ENCODE measurements at regions of chr17 and their contacts with region 1.

Region 1: DNA sequence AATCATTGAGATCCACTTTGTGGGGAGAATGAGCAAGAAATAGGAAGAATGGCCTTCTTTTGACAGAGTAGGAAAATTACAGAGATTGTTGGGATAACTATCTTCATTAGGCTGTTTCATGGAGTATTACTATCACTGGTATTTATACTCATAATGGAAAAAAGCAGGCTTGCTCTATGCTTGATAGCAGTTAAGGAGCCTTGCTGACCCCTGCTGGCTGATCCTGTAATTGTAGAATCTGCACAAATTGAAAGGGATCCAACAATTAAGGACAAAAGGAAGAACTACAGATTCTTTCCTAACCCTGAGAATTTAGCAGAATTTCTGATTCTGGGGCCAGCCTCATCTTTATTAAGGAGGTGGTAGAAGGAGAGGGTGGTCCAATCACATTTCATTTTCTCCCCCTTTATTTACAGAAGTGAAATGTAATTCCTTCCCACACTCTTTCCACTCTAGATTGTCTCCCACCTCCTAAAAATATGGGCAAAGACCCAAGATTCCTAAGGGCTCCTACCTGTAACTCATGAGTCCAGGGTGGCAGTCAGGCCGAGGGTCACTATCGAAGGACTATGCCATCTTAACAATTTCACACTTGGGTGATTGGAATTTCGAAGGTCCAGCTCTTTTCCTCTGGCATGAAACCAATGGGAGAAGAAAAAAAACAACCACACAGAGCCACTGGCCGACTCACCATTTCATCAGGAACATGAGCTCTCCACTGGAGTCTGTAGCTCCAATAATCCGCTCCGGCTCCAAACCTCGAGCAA is 26.3 kb downstream of the NFE2L1 start:
- DNase-seq: peak; percentile 64 to 85 (median 69)
- H3K4me3 ChIP-seq: no peak overlapping the region
- H3K4me3 Mint-ChIP-seq: no peak overlapping the region
- H3K27ac ChIP-seq: no peak overlapping the region
- H3K27ac Mint-ChIP-seq: peak overlapping the region in 2 of 7 donors; percentile 48 to 57
- H3K4me1 ChIP-seq: no peaks in the 10 kb centered on the region
- H3K4me1 Mint-ChIP-seq: peaks cover 0 to 6% (median 2%) of the 10 kb centered on the region in 4 donors
- H3K27me3 ChIP-seq: no peaks in the 10 kb centered on the region
- H3K27me3 Mint-ChIP-seq: no peaks in the 10 kb centered on the region

Region 2: GRCh38 chr17:48011405-48012150 is 62.9 kb before region 1 on chr17:
- CTCF ChIA-PET with region 1: interaction called, 22 read pairs
- POLR2A ChIA-PET with region 1: no interaction called
- intact Hi-C with region 1: no loop called
- DNase-seq: peak; percentile 25 to 51 (median 42)
- H3K4me3 ChIP-seq: peak overlapping the region in 1 of 2 donors; percentile 36
- H3K4me3 Mint-ChIP-seq: peak overlapping the region; percentile 76 to 92 (median 84)
- H3K27ac ChIP-seq: no peak overlapping the region
- H3K27ac Mint-ChIP-seq: peak overlapping the region in 3 of 7 donors; percentile 11 to 85 (median 77)
- H3K4me1 ChIP-seq: peaks cover 8% of the 10 kb centered on the region
- H3K4me1 Mint-ChIP-seq: peaks cover 9 to 18% (median 14%) of the 10 kb centered on the region in 4 donors
- H3K27me3 ChIP-seq: peaks cover 11% of the 10 kb centered on the region
- H3K27me3 Mint-ChIP-seq: peaks cover 22 to 42% of the 10 kb centered on the region in 2 donors

Region 3: GRCh38 chr17:48037036-48037837 is 37.3 kb before region 1 on chr17 and contains the start of gene COPZ2:
- CTCF ChIA-PET with region 1: interaction called, 38 read pairs
- POLR2A ChIA-PET with region 1: no interaction called
- intact Hi-C with region 1: loop called (anchors 1 kb)
- DNase-seq: peak; percentile 62 to 74 (median 63)
- H3K4me3 ChIP-seq: peak within 1 kb of the TSS; percentile 23 to 67
- H3K4me3 Mint-ChIP-seq: peak within 1 kb of the TSS; percentile 87 to 95 (median 88)
- H3K27ac ChIP-seq: no peak within 1 kb of the TSS
- H3K27ac Mint-ChIP-seq: peak within 1 kb of the TSS in 6 of 7 donors; percentile 4 to 67 (median 30)
- H3K4me1 ChIP-seq: peaks cover 7% of the 10 kb centered on the region
- H3K4me1 Mint-ChIP-seq: peaks cover 4 to 7% (median 5%) of the 10 kb centered on the region in 4 donors
- H3K27me3 ChIP-seq: no peaks in the 10 kb centered on the region
- H3K27me3 Mint-ChIP-seq: peaks cover 7 to 32% of the 10 kb centered on the region in 2 donors
- total RNA-seq, gene COPZ2: 1.9 to 2.0 TPM

Region 4: DNA sequence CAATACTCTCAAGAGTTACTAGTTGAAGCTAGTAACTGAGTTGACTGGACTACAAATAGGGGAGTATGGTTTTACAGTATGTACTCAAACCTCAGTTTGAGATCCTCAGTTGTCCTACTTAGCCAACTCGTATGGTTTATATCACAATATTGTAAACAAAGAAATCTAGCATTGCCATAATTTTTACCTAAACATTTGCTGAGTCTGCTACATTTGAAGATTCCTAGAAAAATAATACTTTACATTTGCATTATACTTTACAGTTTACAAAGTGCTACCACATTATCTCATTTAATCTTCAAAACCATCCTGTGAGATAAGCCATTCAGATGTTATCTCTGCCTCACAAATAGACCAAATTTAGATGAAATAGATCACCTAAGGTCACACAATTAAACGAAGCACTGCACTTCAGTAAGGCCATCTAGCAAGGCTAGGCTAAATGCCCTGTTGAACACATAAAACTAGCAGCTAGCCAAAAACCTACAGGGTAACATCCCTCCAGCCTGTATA is 10.5 kb after region 1 on chr17:
- CTCF ChIA-PET with region 1: interaction called, 22 read pairs
- POLR2A ChIA-PET with region 1: interaction called, 3 read pairs
- intact Hi-C with region 1: no loop called
- DNase-seq: no peak
- H3K4me3 ChIP-seq: no peak overlapping the region
- H3K4me3 Mint-ChIP-seq: no peak overlapping the region
- H3K27ac ChIP-seq: no peak overlapping the region
- H3K27ac Mint-ChIP-seq: no peak overlapping the region
- H3K4me1 ChIP-seq: no peaks in the 10 kb centered on the region
- H3K4me1 Mint-ChIP-seq: peaks cover 7 to 10% (median 9%) of the 10 kb centered on the region in 4 donors
- H3K27me3 ChIP-seq: no peaks in the 10 kb centered on the region
- H3K27me3 Mint-ChIP-seq: no peaks in the 10 kb centered on the region

Region 5: GRCh38 chr17:48131216-48131824 is 56.8 kb after region 1 on chr17:
- CTCF ChIA-PET with region 1: interaction called, 174 read pairs
- POLR2A ChIA-PET with region 1: interaction called, 9 read pairs
- intact Hi-C with region 1: no loop called
- DNase-seq: peak; percentile 49 to 59 (median 50)
- H3K4me3 ChIP-seq: no peak overlapping the region
- H3K4me3 Mint-ChIP-seq: no peak overlapping the region
- H3K27ac ChIP-seq: no peak overlapping the region
- H3K27ac Mint-ChIP-seq: peak overlapping the region in 5 of 7 donors; percentile 23 to 87 (median 62)
- H3K4me1 ChIP-seq: no peaks in the 10 kb centered on the region
- H3K4me1 Mint-ChIP-seq: peaks cover 0 to 5% (median 2%) of the 10 kb centered on the region in 4 donors
- H3K27me3 ChIP-seq: no peaks in the 10 kb centered on the region
- H3K27me3 Mint-ChIP-seq: no peaks in the 10 kb centered on the region

Region 6: DNA sequence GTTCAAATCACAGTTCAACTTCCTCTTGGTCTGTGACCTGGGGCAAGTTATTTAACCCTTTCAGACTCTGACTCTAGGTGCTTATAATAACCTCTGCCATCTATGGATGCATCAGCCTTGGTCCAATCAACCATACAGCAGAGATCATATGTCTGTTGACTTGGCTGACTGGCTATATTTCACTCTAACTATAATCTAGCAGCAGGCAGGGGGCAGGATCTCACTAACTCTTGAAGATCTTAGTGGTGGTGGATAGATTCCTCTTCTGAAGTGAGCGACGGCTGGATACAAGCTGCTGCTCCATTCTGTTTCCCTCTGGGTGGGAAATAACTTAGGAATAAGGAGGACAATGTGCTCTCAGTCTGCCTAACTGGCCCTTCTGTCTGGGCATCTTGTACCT is 208.9 kb after region 1 on chr17:
- CTCF ChIA-PET with region 1: no interaction called
- POLR2A ChIA-PET with region 1: no interaction called
- intact Hi-C with region 1: no loop called
- DNase-seq: no peak
- H3K4me3 ChIP-seq: no peak overlapping the region
- H3K4me3 Mint-ChIP-seq: no peak overlapping the region
- H3K27ac ChIP-seq: no peak overlapping the region
- H3K27ac Mint-ChIP-seq: no peak overlapping the region
- H3K4me1 ChIP-seq: no peaks in the 10 kb centered on the region
- H3K4me1 Mint-ChIP-seq: peaks cover 10 to 19% (median 13%) of the 10 kb centered on the region in 4 donors
- H3K27me3 ChIP-seq: no peaks in the 10 kb centered on the region
- H3K27me3 Mint-ChIP-seq: no peaks in the 10 kb centered on the region

Measured in CD4-positive, alpha-beta memory T cell (primary cell).